Activated B cell treated with CpG ODN at 0.5 μM for 24 hours (primary cell): ENCODE measurements at regions of chr15 and their contacts with region 1.

Region 1: GRCh38 chr15:75201609-75202250 is at the start of gene C15orf39:
- DNase-seq: peak; percentile 83
- ATAC-seq: peak; percentile 58
- H3K4me3 Mint-ChIP-seq: peak within 1 kb of the TSS; percentile 90
- H3K27ac Mint-ChIP-seq: peak within 1 kb of the TSS; percentile 82
- H3K4me1 Mint-ChIP-seq: peaks cover 37% of the 10 kb centered on the region
- H3K27me3 Mint-ChIP-seq: peaks cover 4% of the 10 kb centered on the region
- CTCF ChIP-seq: no peak
- total RNA-seq, gene C15orf39: 59.6 and 73.2 TPM in 2 replicates

Region 2: DNA sequence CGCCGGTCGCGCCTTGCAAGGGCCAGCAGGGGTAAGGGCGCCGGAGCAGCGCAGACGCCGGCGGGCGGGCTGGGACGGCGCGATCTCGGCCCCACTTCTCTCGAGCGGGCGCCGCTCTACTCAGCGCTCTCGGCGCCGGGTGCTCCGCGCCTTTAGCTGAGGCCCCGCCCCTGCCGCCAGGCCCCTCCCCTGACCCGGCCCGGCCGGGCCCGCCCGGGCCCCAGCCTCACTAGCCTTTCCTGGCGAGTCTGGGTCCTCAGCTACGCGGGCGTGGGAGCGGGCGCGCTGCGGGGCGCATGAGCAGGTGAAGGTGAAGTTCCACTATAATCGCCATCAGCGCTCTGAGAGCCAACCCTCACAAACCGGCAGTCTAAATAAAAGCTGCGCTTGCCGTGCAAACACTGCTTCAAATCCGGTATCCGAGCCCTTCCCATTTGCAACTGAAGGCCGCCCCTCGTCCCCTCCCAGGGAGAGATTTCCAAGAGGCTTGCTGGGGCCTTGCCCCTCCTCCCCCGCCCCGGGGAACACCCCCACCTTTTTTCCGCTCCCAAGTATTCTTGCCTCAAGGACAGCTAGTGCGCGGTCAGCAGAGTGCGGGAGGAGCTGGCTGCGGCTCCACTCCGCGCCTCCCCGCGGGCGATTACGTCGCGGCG is 245.0 kb before region 1 on chr15 and contains the start of gene RPP25:
- CTCF ChIA-PET with region 1: interaction called, 4 read pairs
- POLR2A ChIA-PET with region 1: interaction called, 4 read pairs
- intact Hi-C with region 1: loop called (anchors 1 kb)
- DNase-seq: peak; percentile 73
- ATAC-seq: peak; percentile 93
- H3K4me3 Mint-ChIP-seq: peak within 1 kb of the TSS; percentile 79
- H3K27ac Mint-ChIP-seq: no peak within 1 kb of the TSS
- H3K4me1 Mint-ChIP-seq: peaks cover 34% of the 10 kb centered on the region
- H3K27me3 Mint-ChIP-seq: peaks cover 29% of the 10 kb centered on the region
- CTCF ChIP-seq: no peak
- total RNA-seq, gene RPP25: 4.0 and 4.3 TPM in 2 replicates

Region 3: DNA sequence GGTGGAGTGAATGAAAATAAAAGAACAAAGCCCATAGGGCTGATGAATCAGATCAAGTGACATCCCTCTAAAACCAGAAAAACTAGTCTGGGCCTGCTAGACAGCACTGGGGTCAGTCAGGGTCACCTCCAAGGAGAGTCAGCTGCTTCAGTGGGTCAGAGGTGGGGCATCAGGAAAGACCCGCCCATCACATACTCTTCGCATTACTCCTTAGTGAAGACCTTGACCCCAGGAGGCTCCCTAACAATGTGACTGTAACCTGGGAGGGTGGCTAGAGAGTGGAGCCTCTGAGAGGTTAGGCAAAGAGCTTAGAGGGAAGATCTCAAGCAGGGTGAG is 165.4 kb before region 1 on chr15:
- CTCF ChIA-PET with region 1: interaction called, 149 read pairs
- POLR2A ChIA-PET with region 1: interaction called, 8 read pairs
- intact Hi-C with region 1: no loop called
- DNase-seq: no peak
- ATAC-seq: no peak
- H3K4me3 Mint-ChIP-seq: no peak overlapping the region
- H3K27ac Mint-ChIP-seq: no peak overlapping the region
- H3K4me1 Mint-ChIP-seq: peaks cover 20% of the 10 kb centered on the region
- H3K27me3 Mint-ChIP-seq: no peaks in the 10 kb centered on the region
- CTCF ChIP-seq: no peak

Region 4: GRCh38 chr15:75095594-75095993 is 106.1 kb before region 1 on chr15:
- CTCF ChIA-PET with region 1: interaction called, 4 read pairs
- POLR2A ChIA-PET with region 1: interaction called, 7 read pairs
- intact Hi-C with region 1: loop called (anchors 1 kb)
- DNase-seq: no peak
- ATAC-seq: peak; percentile 9
- H3K4me3 Mint-ChIP-seq: peak overlapping the region; percentile 50
- H3K27ac Mint-ChIP-seq: peak overlapping the region; percentile 73
- H3K4me1 Mint-ChIP-seq: peaks cover 36% of the 10 kb centered on the region
- H3K27me3 Mint-ChIP-seq: peaks cover 13% of the 10 kb centered on the region
- CTCF ChIP-seq: no peak

Region 5: DNA sequence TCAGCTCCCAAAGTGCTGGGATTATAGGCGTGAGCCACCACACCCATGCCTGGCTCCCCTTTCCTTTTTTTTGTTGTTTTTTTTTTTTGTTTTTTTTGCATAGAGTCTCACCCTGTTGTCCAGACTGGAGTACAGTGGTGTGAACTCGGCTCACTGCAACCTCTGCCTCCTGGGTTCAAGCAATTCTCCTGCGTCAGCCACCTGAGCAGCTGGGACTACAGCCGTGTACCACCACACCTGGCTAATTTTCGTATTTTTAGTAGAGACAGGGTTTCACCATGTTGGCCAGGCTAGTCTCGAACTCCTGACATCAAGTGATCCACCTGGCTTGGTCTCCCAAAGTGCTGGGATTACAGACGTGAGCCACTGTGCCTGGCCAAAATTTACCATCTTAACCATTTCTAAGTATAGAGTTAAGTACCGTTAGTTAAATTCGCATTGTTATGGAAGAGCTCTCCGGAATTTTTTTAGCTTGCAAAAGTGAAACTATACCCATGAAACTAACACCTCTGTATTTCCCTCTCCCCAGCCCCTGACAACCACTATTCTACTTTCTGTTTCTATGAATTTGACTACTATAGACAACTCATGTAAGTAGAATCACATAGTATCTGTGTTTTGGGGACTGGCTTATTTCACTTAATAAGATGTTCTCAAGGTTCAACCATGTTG is 71.0 kb before region 1 on chr15:
- CTCF ChIA-PET with region 1: interaction called, 3 read pairs
- POLR2A ChIA-PET with region 1: interaction called, 14 read pairs
- intact Hi-C with region 1: loop called (anchors 2 kb)
- DNase-seq: no peak
- ATAC-seq: peak; percentile 96
- H3K4me3 Mint-ChIP-seq: peak overlapping the region; percentile 80
- H3K27ac Mint-ChIP-seq: peak overlapping the region; percentile 73
- H3K4me1 Mint-ChIP-seq: peaks cover 19% of the 10 kb centered on the region
- H3K27me3 Mint-ChIP-seq: no peaks in the 10 kb centered on the region
- CTCF ChIP-seq: no peak